Heart left ventricle (tissue), 16 donors: ENCODE measurements at regions of chr21 and their contacts with region 1.

Region 1: DNA sequence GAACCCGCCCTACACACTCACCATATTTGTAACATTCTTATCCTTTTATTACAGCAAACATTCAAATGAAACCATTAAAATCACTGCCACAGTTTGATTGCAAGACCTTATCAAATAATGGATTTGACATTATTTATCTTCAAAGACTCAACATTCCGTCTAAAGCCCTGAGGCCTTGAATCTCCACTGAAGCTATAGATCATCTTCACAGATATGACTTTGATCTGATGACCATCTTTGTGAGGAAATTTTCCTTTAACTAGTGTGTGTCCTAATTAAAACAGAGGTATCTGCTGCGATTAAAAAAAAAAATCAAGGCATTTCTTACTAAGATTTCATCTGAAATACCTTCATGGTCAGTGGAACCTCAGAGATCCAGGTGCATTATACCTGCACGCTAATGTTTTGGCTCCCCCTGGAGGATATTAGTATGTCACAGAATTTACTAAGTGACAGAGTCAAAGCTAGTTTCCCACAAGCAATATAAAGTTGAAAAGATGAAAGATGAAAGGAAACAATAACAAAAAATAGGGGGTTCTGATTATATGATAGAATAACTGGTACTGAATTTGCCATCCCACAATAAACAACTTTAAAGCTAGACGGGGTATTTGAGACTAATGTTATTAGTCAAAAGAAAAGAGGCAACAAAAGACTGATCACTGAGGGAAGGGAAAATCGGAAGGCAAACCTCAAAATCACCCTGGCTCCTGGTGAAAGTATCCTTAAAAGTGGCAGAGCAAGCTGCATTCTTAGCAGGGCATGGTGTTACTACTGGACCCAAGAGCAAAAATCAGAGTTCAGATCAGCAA is 923.4 kb downstream of the NCAM2 start:
- DNase-seq: no peak
- ATAC-seq: no peak
- H3K4me3 ChIP-seq: no peak overlapping the region
- H3K27ac ChIP-seq: no peak overlapping the region
- H3K4me1 ChIP-seq: no peaks in the 10 kb centered on the region
- H3K27me3 ChIP-seq: no peaks in the 10 kb centered on the region
- CTCF ChIP-seq: peak in 10 of 12 donors; percentile 10 to 56 (median 39)
- POLR2A ChIP-seq: no peak

Region 2: DNA sequence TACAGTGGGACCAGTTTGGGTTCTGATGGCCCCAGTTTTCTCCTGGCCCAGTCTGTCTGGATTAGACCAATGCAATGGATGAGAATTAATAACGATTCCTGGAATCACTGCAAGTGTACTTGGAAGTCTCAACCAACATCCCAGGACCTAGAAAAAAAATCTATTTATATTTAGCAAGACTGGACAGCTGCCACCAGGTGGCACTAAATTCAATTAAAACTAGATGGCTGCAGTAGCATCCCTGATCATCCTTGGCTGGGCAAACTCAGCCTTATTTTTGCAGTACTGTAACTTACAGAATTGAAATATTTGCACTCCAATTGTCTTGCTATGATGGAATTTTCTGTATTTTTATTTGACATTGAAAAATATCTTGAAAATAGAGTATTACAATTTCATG is 757.7 kb before region 1 on chr21:
- intact Hi-C with region 1: loop called in 2 of 10 experiments (anchors 5 to 10 kb)
- DNase-seq: peak in 4 of 5 donors; percentile 29 to 39 (median 34)
- ATAC-seq: peak in 2 of 4 donors; percentile 49 to 69
- H3K4me3 ChIP-seq: no peak overlapping the region
- H3K27ac ChIP-seq: no peak overlapping the region
- H3K4me1 ChIP-seq: peaks cover 0 to 14% (median 2%) of the 10 kb centered on the region in 12 donors
- H3K27me3 ChIP-seq: no peaks in the 10 kb centered on the region
- CTCF ChIP-seq: peak; percentile 17 to 65 (median 51)
- POLR2A ChIP-seq: no peak

Region 3: DNA sequence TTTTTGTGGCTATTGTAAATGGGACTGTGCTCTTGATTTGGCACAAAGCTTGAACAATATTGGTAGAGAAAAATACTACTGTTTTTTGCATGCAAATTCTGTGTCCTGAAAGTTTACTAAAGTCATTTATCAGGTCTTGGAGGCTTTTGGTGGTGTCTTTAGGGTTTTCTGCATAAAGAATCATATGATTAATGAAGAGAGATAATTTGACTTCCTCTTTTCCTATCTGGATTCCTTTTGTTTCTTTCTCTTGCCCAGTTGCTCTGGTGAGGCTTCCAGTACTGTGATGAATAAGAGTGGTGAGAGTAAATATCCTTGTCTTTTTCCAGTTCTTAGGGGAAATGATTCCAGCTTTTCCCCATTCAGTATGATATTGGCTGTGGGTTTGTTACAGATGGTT is 243.3 kb after region 1 on chr21:
- intact Hi-C with region 1: no loop called
- DNase-seq: no peak
- ATAC-seq: no peak
- H3K4me3 ChIP-seq: no peak overlapping the region
- H3K27ac ChIP-seq: no peak overlapping the region
- H3K4me1 ChIP-seq: no peaks in the 10 kb centered on the region
- H3K27me3 ChIP-seq: no peaks in the 10 kb centered on the region
- CTCF ChIP-seq: no peak
- POLR2A ChIP-seq: no peak